ENCODE measurements at regions of chr1 and their contacts with region 1.

Region 1: DNA sequence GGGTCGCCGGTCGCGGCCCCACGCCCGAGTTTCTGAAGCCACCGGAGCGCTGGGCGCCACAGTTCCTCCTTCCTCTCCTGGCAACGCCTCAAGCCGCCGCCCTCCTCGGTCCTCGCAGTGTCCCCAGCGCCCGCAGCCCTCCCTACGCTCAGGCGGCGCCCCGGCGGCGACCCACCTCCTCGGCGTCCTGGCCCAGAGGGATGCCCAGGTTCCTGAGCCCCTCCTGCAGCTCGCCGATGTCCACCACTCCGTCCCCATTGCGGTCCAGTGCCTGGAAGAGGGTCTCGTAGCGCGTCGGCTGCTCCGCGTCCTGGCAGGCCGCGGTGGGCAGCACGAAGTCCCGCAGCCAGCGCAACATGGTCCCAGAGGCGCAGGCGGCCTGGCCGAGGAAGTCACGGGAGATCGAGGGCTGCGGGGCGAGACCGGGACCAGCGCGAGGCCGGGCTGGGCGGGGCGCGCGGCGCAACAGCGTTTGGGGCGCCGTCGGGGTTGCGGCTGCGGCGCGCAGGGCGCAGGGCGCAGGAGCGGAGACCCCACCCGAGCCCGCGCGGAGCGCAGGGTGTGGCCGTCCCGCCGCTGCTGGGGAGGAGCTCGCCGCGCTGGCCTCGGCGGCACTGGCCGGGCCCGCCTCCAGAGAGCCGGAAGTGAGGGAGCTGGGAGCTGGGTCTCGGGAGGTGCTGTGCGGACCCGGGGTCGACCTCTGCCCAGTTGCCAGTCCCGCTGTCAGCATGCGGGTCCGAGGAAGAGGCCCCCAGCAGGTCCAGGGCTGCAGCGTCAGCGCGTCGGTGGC is at the start of gene SLC25A24:
- DNase-seq: peak; percentile 61 to 70
- ATAC-seq: peak; percentile 84
- H3K4me3 ChIP-seq: peak within 1 kb of the TSS; percentile 84 to 97 (median 88)
- H3K27ac ChIP-seq: peak within 1 kb of the TSS; percentile 89 to 97 (median 92)
- H3K4me1 ChIP-seq: peaks cover 19 to 20% of the 10 kb centered on the region in 2 donors
- H3K27me3 ChIP-seq: no peaks in the 10 kb centered on the region
- CTCF ChIP-seq: no peak
- POLR2A ChIP-seq: peak; percentile 63 to 67
- total RNA-seq, gene SLC25A24: 6.8 to 12.3 (median 9.3) TPM

Region 2: DNA sequence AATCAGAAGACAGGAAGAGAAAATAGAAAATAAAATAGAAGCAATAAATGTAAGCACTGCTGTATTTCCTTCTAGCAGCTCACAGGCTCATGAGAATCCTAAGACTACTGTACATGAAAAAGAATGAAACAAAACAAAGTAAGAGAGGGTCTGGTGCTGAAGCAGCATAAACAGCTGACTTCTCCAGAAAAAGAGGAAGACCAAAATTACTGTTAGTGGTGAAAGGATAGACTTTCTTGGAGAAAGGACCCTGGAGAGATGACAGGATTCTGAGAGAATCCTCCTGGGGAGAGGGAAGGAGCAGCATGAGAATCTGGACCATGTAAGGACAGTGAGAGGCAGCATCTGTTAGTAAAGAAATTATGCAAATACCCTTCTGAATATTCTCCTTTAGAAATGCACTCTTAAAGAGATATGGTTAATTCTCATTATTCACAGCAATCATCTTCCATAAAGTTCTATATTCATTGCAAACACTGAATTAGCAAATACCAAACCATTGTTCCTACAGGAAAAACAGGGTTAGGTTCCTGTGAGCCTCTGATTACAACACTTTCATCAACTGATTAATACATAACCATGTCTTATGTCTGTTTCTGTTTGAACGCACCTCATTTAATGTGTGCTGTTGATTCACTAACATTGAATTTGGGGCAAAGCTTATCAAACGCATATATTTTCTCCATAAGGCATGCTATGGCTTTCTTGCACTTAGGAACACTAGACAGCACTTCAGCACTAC is 16.8 kb before region 1 on chr1:
- in situ Hi-C with region 1: no loop called
- intact Hi-C with region 1: loop called (anchors 2 kb)
- DNase-seq: no peak
- ATAC-seq: peak in 1 of 2 donors; percentile 23
- H3K4me3 ChIP-seq: peak overlapping the region in 1 of 4 donors; percentile 0
- H3K27ac ChIP-seq: peak overlapping the region; percentile 70 to 82 (median 76)
- H3K4me1 ChIP-seq: peaks cover 12 to 19% of the 10 kb centered on the region in 2 donors
- H3K27me3 ChIP-seq: no peaks in the 10 kb centered on the region
- CTCF ChIP-seq: no peak
- POLR2A ChIP-seq: no peak

Region 3: GRCh38 chr1:108327534-108328462 is 127.8 kb after region 1 on chr1:
- in situ Hi-C with region 1: loop called in 1 of 4 experiments (anchors 25 kb)
- intact Hi-C with region 1: no loop called
- DNase-seq: no peak
- ATAC-seq: no peak
- H3K4me3 ChIP-seq: no peak overlapping the region
- H3K27ac ChIP-seq: no peak overlapping the region
- H3K4me1 ChIP-seq: no peaks in the 10 kb centered on the region
- H3K27me3 ChIP-seq: no peaks in the 10 kb centered on the region
- CTCF ChIP-seq: no peak
- POLR2A ChIP-seq: no peak